ENCODE measurements at regions of chr6 and their contacts with region 1.

Region 1: DNA sequence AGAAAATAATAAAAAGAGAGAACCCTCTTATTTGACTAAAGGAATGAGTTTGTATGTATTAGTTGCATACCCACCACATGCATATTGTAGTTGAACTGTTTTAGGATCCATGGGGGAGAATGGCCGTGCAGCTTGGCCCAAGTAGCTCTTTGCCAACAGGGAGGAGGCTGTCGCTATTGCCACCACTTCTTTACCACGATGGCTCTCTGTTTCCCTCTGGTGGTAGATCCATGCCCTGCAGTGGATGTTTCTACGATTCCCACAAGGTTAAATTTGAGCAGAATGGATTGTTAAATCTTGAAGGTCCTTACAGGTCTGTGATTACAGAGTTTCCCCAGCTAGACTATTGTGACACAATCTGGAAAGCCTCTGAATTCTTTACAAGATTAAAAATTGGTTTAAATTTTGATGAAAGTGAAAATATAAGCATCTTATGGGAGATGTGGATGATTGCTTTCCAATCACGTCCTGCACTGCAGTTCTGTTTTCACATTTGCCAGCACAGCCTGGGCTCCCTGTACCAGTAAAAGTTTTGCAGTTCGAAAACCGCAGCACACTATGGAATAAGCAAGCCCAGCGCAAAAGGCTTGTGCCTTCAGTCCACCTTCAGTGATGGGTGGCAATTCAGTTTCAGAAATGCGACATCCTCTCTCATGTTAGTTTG is 34.4 kb upstream of the FNDC1 start:
- DNase-seq: peak in 1 of 2 donors; percentile 74
- ATAC-seq: peak; percentile 86

Region 2: GRCh38 chr6:158972241-158973233 is 162.3 kb before region 1 on chr6:
- intact Hi-C with region 1: no loop called
- DNase-seq: no peak
- ATAC-seq: peak; percentile 88

Region 3: GRCh38 chr6:158999666-159000403 is 135.0 kb before region 1 on chr6 and contains the start of gene RSPH3:
- intact Hi-C with region 1: loop called in 1 of 2 experiments (anchors 10 kb)
- DNase-seq: peak; percentile 95 to 96
- ATAC-seq: peak; percentile 89
- total RNA-seq, gene RSPH3: 17.6 to 20.0 TPM

Region 4: DNA sequence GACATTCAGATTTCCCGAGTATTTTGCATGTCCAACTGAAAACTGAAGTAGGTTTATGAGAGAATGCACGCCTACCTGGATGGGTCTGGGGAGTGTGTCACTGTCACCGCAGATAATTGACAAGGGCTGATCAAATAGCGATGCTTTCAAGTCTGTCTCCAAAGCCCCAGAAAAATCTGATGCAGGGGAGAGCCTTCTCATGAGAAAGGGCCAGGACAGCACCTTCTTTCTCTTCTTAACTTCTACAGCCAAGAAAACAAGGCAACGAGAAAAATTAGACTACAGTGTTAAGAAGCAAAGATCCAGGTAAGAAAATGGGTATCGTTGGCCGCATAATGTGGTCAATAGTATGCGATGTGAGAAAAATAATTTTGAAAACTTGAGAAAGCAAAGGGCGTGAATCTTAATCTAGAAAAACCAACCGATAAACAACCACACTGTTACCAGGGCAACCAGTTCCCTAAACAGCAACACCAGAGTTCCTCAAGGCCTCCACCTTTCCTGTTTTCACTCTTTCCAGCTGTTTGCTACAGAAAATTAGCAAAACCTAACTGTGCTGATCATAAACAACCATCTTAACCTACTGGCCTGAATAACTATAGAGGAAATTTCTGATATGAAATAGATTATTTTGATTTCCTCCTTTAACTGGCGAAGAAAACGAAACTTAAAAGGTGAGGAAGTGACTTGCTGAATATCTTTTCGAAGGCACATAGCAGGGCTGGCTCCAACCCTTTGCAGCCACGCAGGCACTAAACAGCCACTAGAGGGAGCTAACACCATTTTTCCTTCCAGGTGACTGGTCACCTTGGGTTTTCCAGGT is 92.6 kb before region 1 on chr6:
- intact Hi-C with region 1: loop called in 1 of 2 experiments (anchors 5 kb)
- DNase-seq: peak; percentile 70 to 76
- ATAC-seq: peak; percentile 94

Measured in left colon (tissue), 2 donors.